Activated CD4-positive, alpha-beta T cell treated with anti-CD3 and anti-CD28 coated beads for 36 hours (primary cell): ENCODE measurements at regions of chr7 and their contacts with region 1.

Region 1: GRCh38 chr7:2934211-2934731 is 90.2 kb upstream of the GNA12 start:
- DNase-seq: peak; percentile 82
- ATAC-seq: peak; percentile 98
- H3K4me3 Mint-ChIP-seq: peak overlapping the region; percentile 43
- H3K27ac Mint-ChIP-seq: peak overlapping the region; percentile 100
- H3K4me1 Mint-ChIP-seq: peaks cover 20% of the 10 kb centered on the region
- H3K27me3 Mint-ChIP-seq: no peaks in the 10 kb centered on the region

Region 2: DNA sequence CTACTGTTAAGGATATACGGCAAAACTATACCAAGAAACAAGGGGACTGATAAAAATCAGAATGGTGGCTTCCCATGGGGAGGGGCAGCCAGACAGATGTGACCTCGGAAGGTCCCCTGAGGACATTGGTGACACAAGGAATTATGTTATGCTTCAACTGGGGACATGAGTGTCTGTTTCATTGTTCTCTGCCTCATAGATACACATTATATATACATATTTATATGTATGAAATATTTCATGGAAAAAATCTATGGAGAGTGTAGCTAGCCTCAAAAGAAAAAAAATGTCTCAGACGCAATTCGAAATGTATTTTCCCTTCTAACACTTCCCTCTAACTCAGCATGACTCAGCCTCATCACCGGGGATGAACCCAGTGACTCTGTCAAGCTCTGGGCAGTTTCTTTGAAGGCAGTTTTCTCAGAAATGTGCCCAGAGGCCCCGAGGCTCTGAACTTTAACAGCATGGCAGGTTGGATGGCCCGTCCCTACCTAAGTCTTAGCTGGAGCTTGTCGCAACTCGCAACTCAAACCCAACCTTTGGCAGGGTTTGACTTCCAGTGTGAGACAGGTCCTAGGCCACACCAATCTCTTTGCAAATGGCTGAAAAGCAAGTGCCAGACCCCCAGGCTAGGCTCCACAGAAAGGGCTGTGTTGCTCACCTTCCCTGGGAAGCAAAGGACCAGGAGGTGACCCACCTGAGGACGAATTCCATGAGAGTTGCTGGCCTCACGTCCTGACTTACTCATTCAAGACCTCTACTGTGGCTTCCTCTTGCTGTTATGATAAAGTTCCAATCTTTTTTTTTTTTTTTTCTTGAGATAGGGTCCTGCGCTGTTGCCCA is 22.5 kb after region 1 on chr7:
- CTCF ChIA-PET with region 1: interaction called, 7 read pairs
- POLR2A ChIA-PET with region 1: interaction called, 3 read pairs
- intact Hi-C with region 1: loop called in 1 of 2 experiments (anchors 1 kb)
- DNase-seq: peak; percentile 80
- ATAC-seq: peak; percentile 86
- H3K4me3 Mint-ChIP-seq: peak overlapping the region; percentile 38
- H3K27ac Mint-ChIP-seq: peak overlapping the region; percentile 83
- H3K4me1 Mint-ChIP-seq: peaks cover 73% of the 10 kb centered on the region
- H3K27me3 Mint-ChIP-seq: no peaks in the 10 kb centered on the region

Region 3: GRCh38 chr7:3042861-3043489 is 108.7 kb after region 1 on chr7:
- CTCF ChIA-PET with region 1: no interaction called
- POLR2A ChIA-PET with region 1: no interaction called
- intact Hi-C with region 1: loop called (anchors 1 kb)
- DNase-seq: peak; percentile 86
- ATAC-seq: peak; percentile 80
- H3K4me3 Mint-ChIP-seq: peak overlapping the region; percentile 97
- H3K27ac Mint-ChIP-seq: peak overlapping the region; percentile 97
- H3K4me1 Mint-ChIP-seq: peaks cover 55% of the 10 kb centered on the region
- H3K27me3 Mint-ChIP-seq: no peaks in the 10 kb centered on the region

Region 4: DNA sequence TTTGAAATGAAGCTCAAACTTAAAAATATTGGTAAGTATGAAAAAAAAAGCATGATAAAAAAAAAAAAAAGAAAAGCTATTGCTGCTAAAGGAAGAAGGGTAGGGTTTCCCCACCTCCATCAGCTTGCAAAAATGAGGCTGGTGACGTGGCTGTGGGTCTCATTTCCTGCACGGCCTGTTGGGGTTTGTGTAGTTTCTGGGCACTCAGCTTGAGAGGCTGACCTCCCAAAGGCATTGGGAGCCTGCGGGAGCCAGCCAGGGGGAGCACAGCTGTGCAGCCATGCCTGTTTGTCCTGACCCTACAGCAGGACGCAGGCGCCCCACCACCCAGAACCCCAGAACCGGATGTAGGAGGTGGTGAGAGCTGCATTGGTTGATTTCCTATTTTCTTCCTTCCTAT is 158.2 kb after region 1 on chr7:
- CTCF ChIA-PET with region 1: interaction called, 3 read pairs
- POLR2A ChIA-PET with region 1: interaction called, 10 read pairs
- intact Hi-C with region 1: no loop called
- DNase-seq: peak; percentile 88
- ATAC-seq: peak; percentile 86
- H3K4me3 Mint-ChIP-seq: peak overlapping the region; percentile 32
- H3K27ac Mint-ChIP-seq: peak overlapping the region; percentile 89
- H3K4me1 Mint-ChIP-seq: peaks cover 67% of the 10 kb centered on the region
- H3K27me3 Mint-ChIP-seq: no peaks in the 10 kb centered on the region

Region 5: GRCh38 chr7:3154912-3155494 is 220.7 kb after region 1 on chr7:
- CTCF ChIA-PET with region 1: no interaction called
- POLR2A ChIA-PET with region 1: no interaction called
- intact Hi-C with region 1: loop called in 1 of 2 experiments (anchors 1 kb)
- DNase-seq: peak; percentile 80
- ATAC-seq: peak; percentile 72
- H3K4me3 Mint-ChIP-seq: no peak overlapping the region
- H3K27ac Mint-ChIP-seq: no peak overlapping the region
- H3K4me1 Mint-ChIP-seq: peaks cover 26% of the 10 kb centered on the region
- H3K27me3 Mint-ChIP-seq: peaks cover 2% of the 10 kb centered on the region

Region 6: DNA sequence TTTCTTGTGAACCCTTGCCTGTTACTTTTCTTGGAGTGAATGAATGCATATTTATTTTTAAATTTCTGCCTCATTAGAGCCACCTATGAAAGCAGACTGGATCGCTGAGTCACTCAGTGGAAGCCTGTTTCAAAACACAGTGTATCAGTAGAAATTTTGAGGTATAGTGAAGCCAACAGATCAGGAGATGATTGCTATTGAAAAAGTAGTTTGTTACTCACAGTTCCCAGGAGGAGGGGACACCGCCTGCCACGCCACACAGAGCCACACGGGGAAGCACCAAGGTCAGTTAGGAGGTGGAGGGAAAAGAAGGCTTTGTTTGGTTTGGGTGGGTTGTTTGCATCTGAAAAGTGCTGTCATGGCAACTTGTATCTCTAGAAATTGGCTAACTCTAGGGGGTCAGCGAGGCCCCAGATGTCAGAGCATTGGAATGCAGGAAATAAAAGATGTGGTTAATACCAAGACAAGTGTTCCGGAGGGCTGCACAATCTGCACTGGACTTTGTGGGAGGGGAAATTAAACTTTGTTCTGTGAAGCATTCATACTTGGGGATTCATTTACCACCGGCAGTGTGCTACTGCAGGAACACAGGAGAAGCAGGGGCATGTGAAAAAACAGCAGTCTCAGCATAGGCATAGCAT is 260.4 kb after region 1 on chr7:
- CTCF ChIA-PET with region 1: no interaction called
- POLR2A ChIA-PET with region 1: no interaction called
- intact Hi-C with region 1: no loop called
- DNase-seq: peak; percentile 10
- ATAC-seq: no peak
- H3K4me3 Mint-ChIP-seq: no peak overlapping the region
- H3K27ac Mint-ChIP-seq: no peak overlapping the region
- H3K4me1 Mint-ChIP-seq: no peaks in the 10 kb centered on the region
- H3K27me3 Mint-ChIP-seq: peaks cover 8% of the 10 kb centered on the region